ENCODE measurements at regions of chr15 and their contacts with region 1.

Region 1: GRCh38 chr15:90362936-90363212 is 10.8 kb downstream of the ZNF774 start:
- DNase-seq: peak in 1 of 10 donors; percentile 8

Region 2: GRCh38 chr15:90320061-90320884 is 42.6 kb before region 1 on chr15:
- intact Hi-C with region 1: loop called (anchors 5 kb)
- DNase-seq: peak; percentile 57 to 97 (median 76)

Measured in posterior cingulate gyrus (tissue), 11 donors.